Vagina (tissue), 2 donors: ENCODE measurements at regions of chr11 and their contacts with region 1.

Region 1: GRCh38 chr11:61899146-61899841 is 7.9 kb upstream of the FADS3 start:
- DNase-seq: no peak
- H3K4me3 ChIP-seq: no peak overlapping the region
- H3K27ac ChIP-seq: peak overlapping the region; percentile 56
- H3K4me1 ChIP-seq: peaks cover 15% of the 10 kb centered on the region
- H3K27me3 ChIP-seq: no peaks in the 10 kb centered on the region
- CTCF ChIP-seq: peak; percentile 99 to 100 (median 99)
- POLR2A ChIP-seq: no peak

Region 2: DNA sequence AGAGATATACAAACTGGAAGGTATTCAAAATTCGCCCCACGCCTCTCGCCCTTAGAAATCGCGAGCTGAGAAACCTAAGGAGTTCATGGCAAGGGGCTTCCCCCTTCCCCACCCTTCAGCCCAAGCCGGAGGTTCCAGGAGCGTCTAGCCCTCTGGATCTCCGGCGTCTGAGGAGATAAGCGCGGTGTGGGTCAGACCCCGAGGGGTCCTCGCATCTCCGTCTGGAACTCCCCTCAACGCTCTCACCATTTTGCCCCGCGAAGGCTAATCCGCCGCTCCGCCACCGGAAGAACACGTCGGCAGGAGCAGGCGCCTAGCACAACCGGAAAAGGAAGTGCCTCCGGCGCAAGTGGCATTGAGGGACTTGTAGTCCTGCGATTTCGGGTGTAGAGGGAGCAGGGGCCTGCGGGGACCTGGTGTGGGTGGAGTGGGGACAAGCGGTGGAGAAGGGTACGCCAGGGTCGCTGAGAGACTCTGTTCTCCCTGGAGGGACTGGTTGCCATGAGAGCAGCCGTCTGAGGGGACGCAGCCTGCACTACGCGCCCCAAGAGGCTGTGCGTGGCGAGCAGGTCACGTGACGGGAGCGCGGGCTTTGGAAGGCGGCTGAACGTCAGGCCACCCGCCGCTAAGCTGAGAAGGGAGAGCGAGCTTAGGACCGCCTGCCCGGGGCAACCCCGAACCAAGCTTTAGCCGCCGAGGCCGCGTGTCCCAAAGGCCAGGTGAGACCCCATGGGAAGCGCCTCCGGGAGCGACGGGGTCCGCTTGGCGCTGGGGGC is 106.8 kb before region 1 on chr11 and contains the starts of genes FEN1 and TMEM258:
- intact Hi-C with region 1: loop called (anchors 10 kb)
- DNase-seq: peak in 1 of 2 donors; percentile 96
- H3K4me3 ChIP-seq: peak within 1 kb of the TSS; percentile 79 to 84
- H3K27ac ChIP-seq: peak within 1 kb of the TSS; percentile 96
- H3K4me1 ChIP-seq: peaks cover 37% of the 10 kb centered on the region
- H3K27me3 ChIP-seq: no peaks in the 10 kb centered on the region
- CTCF ChIP-seq: no peak
- POLR2A ChIP-seq: peak in 1 of 2 donors; percentile 52
- total RNA-seq, gene FEN1: 9.6 TPM
- total RNA-seq, gene TMEM258: 47.9 TPM

Region 3: GRCh38 chr11:61870541-61871031 is 28.7 kb before region 1 on chr11:
- intact Hi-C with region 1: no loop called
- DNase-seq: no peak
- H3K4me3 ChIP-seq: no peak overlapping the region
- H3K27ac ChIP-seq: peak overlapping the region; percentile 46
- H3K4me1 ChIP-seq: peaks cover 12% of the 10 kb centered on the region
- H3K27me3 ChIP-seq: no peaks in the 10 kb centered on the region
- CTCF ChIP-seq: no peak
- POLR2A ChIP-seq: no peak

Region 4: DNA sequence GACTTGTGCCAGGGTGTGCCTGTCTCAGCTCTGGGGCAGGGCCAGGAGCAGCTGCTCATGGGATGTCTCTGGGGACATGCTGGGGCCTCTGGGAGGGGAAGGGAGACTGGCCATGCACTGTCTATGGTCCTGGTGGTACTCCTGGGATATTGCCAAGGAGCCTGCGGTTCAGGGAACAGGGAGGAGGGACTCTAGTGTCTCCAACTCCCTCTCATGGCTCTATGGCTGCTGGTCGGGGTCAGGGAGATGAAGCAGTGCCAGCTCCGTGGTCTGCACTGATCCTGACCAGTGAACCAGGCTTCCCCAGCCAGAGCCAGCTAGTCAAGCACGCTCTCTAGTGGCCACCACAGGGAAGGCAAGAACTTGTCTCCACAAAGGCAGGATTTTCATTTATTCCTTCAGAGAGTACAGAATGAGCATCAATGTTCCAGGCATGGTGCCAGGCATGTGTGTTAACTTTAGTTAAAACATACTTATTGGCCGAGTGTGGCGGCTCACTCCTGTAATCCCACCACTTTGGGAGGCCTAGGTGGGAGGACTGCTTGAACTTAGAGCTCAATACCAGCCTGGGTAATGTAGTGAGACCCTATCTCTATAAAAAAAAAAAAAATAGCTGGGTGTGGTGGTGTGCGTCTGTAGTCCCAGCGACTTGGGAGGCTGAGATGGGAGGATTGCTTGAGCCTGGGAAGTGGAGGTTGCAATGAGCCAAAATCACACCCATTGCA is 48.4 kb after region 1 on chr11:
- intact Hi-C with region 1: loop called (anchors 2 kb)
- DNase-seq: no peak
- H3K4me3 ChIP-seq: no peak overlapping the region
- H3K27ac ChIP-seq: peak overlapping the region; percentile 47
- H3K4me1 ChIP-seq: peaks cover 18% of the 10 kb centered on the region
- H3K27me3 ChIP-seq: no peaks in the 10 kb centered on the region
- CTCF ChIP-seq: peak; percentile 74 to 93 (median 85)
- POLR2A ChIP-seq: no peak

Region 5: DNA sequence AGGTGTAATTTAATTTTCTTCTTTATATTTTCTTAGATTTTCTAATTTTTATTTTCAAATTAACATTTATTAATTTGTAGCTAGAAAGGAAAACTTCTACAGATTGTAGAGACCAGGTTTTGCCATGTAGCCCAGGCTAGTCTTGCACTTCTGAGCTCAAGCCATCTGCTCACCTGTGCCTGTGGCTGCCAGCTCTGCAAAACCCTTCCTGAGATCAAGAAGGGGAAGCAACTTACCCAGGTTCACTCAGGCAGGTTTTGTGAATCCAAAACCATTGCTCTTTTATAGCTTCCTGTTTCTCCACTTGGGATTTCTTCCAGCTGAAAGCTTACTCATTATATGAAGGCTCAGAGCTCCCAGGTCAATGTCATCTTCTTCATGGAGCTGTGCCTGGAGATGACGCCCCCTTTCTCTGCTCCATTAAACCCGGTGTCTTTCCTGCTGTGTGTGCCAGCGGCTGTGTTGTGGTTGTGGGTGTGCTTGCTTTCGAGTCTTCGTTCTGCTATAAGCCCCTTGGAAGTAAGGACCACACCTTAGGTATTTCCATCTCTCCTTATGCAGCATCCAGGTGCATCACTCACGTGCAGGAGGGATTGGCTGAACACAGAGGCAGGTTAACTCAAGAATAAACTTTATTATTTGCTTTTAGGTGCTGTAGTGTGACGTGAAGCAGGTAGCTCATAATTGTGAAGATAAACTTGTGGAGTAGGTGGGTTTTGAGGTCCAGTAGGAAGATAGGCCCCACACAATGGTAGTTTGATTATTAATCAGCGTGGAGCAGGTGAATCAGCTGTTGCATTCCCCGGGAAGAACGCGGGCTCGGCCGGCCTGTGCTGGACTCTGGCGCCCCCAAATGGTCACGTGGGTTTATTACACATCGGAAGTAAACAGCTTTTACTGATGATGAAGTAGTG is 182.3 kb after region 1 on chr11:
- intact Hi-C with region 1: loop called (anchors 5 kb)
- DNase-seq: peak in 1 of 2 donors; percentile 90
- H3K4me3 ChIP-seq: no peak overlapping the region
- H3K27ac ChIP-seq: no peak overlapping the region
- H3K4me1 ChIP-seq: no peaks in the 10 kb centered on the region
- H3K27me3 ChIP-seq: no peaks in the 10 kb centered on the region
- CTCF ChIP-seq: peak; percentile 78 to 88 (median 88)
- POLR2A ChIP-seq: no peak

Region 6: DNA sequence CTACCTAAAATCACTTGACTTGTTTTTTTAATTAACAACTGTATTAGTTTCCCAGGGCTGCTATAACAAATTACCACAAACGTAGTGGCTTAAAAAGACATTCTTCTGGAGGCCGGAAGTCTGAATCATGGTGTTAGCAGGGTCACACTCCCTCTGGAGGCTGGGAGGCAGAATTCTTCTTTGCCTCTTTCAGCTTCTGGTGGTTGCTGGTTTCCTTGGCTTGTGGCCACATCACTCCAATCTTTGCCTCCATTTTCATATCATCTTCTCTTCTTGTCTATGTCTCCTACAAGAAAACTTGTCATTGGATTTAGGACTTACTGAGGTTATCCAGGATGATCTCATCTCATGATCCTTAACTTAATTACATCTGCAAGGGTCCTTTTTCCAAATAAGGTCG is 217.2 kb after region 1 on chr11:
- intact Hi-C with region 1: loop called (anchors 10 kb)
- DNase-seq: no peak
- H3K4me3 ChIP-seq: no peak overlapping the region
- H3K27ac ChIP-seq: no peak overlapping the region
- H3K4me1 ChIP-seq: peaks cover 13% of the 10 kb centered on the region
- H3K27me3 ChIP-seq: no peaks in the 10 kb centered on the region
- CTCF ChIP-seq: no peak
- POLR2A ChIP-seq: no peak